ENCODE measurements at regions of chr13 and their contacts with region 1.

Region 1: GRCh38 chr13:91361755-91362271 is 14.3 kb downstream of the MIR17HG start:
- DNase-seq: peak; percentile 79
- ATAC-seq: peak; percentile 11
- H3K4me3 ChIP-seq: peak overlapping the region in 2 of 3 experiments; percentile 8 to 17; a peak in 2 of 6 replicates
- H3K27ac ChIP-seq: peak overlapping the region; percentile 82
- H3K4me1 ChIP-seq: peaks cover 71% of the 10 kb centered on the region
- H3K27me3 ChIP-seq: no peaks in the 10 kb centered on the region
- CTCF ChIP-seq: no peak
- EP300 ChIP-seq: peak in 1 of 2 experiments; percentile 88; a peak in 2 of 4 replicates
- POLR2A ChIP-seq: no peak
- RAD21 ChIP-seq: no peak

Region 2: GRCh38 chr13:91045351-91046034 is 316.3 kb before region 1 on chr13:
- CTCF ChIA-PET with region 1: no interaction called
- POLR2A ChIA-PET with region 1: no interaction called
- in situ Hi-C with region 1: no loop called
- intact Hi-C with region 1: no loop called
- DNase-seq: no peak
- ATAC-seq: peak; percentile 67
- H3K4me3 ChIP-seq: no peak overlapping the region
- H3K27ac ChIP-seq: no peak overlapping the region
- H3K4me1 ChIP-seq: no peaks in the 10 kb centered on the region
- H3K27me3 ChIP-seq: no peaks in the 10 kb centered on the region
- CTCF ChIP-seq: peak; percentile 30; the same call in 1 of the 2 replicates
- EP300 ChIP-seq: no peak
- POLR2A ChIP-seq: no peak
- RAD21 ChIP-seq: no peak

Region 3: GRCh38 chr13:91348906-91349435 is 12.8 kb before region 1 on chr13:
- CTCF ChIA-PET with region 1: no interaction called
- POLR2A ChIA-PET with region 1: interaction called, 5 read pairs
- in situ Hi-C with region 1: no loop called
- intact Hi-C with region 1: loop called (anchors 2 kb)
- DNase-seq: peak; percentile 75
- ATAC-seq: peak; percentile 54; the same call in 2 of the 3 replicates
- H3K4me3 ChIP-seq: peak overlapping the region; percentile 78 to 88 (median 82)
- H3K27ac ChIP-seq: peak overlapping the region; percentile 89
- H3K4me1 ChIP-seq: peaks cover 51% of the 10 kb centered on the region
- H3K27me3 ChIP-seq: peaks cover 0 to 16% of the 10 kb centered on the region in 2 experiments; a peak in 4 of 5 replicates
- CTCF ChIP-seq: peak; percentile 84
- EP300 ChIP-seq: no peak
- POLR2A ChIP-seq: peak in 1 of 2 experiments; percentile 49; a peak in 1 of 4 replicates
- RAD21 ChIP-seq: peak; percentile 66; the same call in 1 of the 2 replicates

Region 4: DNA sequence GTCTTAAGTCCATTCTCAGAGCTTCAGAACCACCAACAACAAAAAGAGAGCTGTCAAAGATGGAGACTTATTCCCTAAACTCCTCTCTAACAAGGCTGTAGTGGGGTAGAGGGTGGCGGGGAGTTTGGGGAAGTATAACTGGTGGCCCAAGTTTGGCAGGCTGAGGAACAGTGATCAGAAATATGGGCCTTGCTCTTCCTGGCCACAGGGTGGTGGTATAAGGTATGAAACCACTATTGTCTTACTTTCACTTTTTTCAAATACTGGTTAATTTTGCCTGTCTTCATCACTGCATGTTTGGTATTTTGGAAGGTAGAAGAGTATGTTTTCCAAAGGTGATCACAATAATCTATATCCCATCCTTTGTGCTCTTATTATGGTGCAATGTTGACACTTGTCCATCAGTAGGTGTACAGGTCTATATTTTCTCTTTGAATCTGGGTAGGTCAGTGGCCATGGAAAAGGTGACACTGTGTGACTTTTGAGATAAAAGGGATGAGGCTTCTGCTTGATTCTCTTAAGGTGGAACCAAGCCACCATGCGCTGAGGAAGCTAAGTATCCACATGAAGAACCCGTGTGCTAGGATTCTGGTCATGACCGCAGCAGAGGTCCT is 13.4 kb after region 1 on chr13:
- CTCF ChIA-PET with region 1: no interaction called
- POLR2A ChIA-PET with region 1: interaction called, 3 read pairs
- in situ Hi-C with region 1: no loop called
- intact Hi-C with region 1: loop called (anchors 1 kb)
- DNase-seq: no peak
- ATAC-seq: peak; percentile 76
- H3K4me3 ChIP-seq: no peak overlapping the region
- H3K27ac ChIP-seq: no peak overlapping the region
- H3K4me1 ChIP-seq: peaks cover 30% of the 10 kb centered on the region
- H3K27me3 ChIP-seq: no peaks in the 10 kb centered on the region
- CTCF ChIP-seq: peak; percentile 62
- EP300 ChIP-seq: no peak
- POLR2A ChIP-seq: no peak
- RAD21 ChIP-seq: 0 out of 2 replicates have a peak, but pooled peaks have one; percentile 18

Measured in HepG2 (cell line).